K562 (cell line): ENCODE measurements at regions of chr5 and their contacts with region 1.

Region 1: DNA sequence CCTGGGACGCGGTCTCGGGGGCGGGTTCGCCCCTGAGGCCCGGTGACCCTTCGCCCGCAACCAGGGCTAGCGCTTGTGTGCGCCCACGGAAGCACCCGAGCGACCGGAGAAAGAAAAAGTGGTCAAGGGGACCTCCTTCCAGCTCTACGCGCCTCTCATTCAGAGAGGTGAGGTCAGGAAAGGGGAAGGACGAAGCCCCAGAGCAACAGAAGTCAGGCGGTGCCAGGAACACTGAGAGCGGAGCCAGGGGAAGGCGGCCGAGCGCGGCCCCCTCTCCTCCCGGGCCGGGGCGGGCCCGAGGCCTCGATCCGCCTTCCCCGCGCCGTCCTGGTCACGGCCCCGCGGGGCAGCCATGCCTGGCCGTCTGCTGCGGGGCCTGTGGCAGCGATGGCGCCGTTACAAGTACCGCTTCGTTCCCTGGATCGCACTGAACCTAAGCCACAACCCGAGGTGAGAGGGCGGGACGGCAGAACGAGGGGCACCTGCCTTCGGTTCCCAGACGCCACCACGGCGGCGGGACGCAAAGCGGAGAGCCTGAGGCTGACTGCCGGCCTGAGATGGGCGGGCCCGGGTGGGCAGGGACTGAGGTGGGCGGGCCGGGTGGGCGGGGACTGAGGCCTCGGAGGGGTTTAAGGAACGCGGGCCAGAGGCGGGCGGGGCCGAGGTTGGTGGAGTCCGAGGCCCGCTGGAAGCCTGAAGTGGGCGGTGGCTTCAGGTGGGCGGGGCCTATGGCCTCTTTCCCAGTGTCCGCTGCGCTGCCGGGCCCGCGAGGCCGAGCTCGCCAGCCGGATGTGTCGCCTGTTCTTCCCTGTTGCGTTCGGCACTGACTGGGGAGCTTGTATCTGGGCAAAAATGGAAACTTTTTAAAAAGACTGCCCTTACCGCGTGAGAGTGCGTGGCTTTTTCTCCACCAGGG is at the start of gene SETD9:
- DNase-seq: peak; percentile 96 to 98 (median 97)
- ATAC-seq: peak; percentile 92
- H3K4me3 ChIP-seq: peak within 1 kb of the TSS; percentile 64
- H3K27ac ChIP-seq: peak within 1 kb of the TSS; percentile 97
- H3K4me1 ChIP-seq: peaks cover 0 to 7% of the 10 kb centered on the region in 2 experiments; a peak in 3 of 5 replicates
- H3K27me3 ChIP-seq: no peaks in the 10 kb centered on the region
- CTCF ChIP-seq: no peak
- EP300 ChIP-seq: no peak
- POLR2A ChIP-seq: peak; percentile 98
- RAD21 ChIP-seq: 0 out of 4 replicates have a peak, but pooled peaks of 1 of the 2 experiments have one; percentile 2
- polyA plus RNA-seq, gene SETD9: 26.1 to 32.6 TPM

Region 2: DNA sequence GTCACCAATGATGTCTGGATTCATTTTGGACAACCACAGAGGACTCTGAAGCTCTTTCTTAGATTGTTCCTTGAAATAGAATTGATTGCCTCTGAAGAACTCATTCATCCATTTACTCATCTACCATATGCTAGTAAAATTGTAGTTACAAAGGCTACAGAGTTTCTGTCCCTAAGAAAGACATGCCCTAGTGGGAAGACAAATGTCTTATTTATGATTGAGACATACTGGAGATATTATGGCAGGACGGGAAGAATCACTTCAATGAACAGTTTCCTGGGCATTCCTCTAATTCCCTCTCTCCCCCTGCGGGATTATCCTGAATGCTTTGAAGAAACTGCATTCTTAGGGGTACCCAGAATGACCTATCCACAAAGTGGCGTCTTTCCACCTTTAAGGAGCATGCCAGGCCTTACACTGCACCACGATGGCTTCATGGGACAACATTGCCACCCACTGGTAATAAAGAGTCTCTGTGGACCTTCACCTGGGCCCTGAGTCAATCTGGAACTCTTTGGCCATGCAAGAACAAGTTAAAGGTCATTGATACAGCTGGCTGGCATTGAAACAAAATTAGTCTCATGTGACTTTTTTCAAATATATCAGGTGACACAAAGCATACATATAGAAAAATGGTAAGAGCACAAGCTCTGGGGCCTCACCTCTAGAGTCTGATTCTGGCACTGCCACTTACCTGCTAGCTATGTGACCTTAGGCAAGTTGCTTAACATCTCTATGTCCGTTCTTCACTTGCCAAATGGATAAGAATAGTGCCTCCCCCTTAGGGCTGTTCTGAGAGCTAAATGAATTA is 708.5 kb before region 1 on chr5:
- CTCF ChIA-PET with region 1: no interaction called
- POLR2A ChIA-PET with region 1: no interaction called
- in situ Hi-C with region 1: no loop called
- intact Hi-C with region 1: no loop called
- DNase-seq: peak; percentile 38 to 81 (median 56)
- ATAC-seq: peak; percentile 100
- H3K4me3 ChIP-seq: no peak overlapping the region
- H3K27ac ChIP-seq: no peak overlapping the region
- H3K4me1 ChIP-seq: peaks cover 0 to 8% of the 10 kb centered on the region in 2 experiments; a peak in 2 of 5 replicates
- H3K27me3 ChIP-seq: no peaks in the 10 kb centered on the region
- CTCF ChIP-seq: peak; percentile 82 to 93 (median 93)
- EP300 ChIP-seq: no peak
- POLR2A ChIP-seq: no peak
- RAD21 ChIP-seq: peak; percentile 97 to 99

Region 3: DNA sequence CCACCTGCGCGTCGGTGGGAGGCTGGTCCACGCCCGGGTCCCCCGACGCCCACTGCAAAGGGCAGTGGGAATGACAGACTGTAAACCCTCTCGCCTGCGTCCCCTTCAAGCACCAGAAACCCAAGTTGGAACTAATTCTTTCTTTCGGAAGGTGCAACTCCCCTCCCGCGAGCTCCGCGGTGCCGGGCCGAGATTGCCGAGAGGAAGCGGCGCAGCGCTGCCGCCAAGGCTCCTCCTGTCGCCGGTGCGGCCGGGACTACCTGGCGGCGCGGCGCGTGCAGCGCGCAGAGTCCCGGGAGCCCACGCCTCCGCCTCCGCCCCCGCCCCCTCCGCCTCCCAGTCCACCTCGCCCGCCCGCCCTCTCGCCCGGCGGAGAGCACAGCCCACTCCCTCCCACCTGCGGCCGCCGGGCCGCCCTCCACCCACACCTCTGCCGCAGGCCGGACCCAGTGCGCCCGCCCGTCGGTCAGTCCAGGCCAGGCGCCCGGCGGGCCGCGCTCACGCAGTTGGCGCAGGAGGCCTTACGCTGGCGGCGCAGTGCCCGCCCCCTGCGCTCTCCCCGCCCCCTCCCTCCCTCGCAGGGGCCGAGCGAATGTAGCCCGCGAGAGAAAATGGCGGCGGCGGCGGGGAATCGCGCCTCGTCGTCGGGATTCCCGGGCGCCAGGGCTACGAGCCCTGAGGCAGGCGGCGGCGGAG is 94.4 kb before region 1 on chr5 and contains the start of gene MAP3K1:
- CTCF ChIA-PET with region 1: no interaction called
- POLR2A ChIA-PET with region 1: no interaction called
- in situ Hi-C with region 1: no loop called
- intact Hi-C with region 1: loop called (anchors 5 kb)
- DNase-seq: peak; percentile 86 to 91 (median 90)
- ATAC-seq: peak; percentile 74
- H3K4me3 ChIP-seq: peak within 1 kb of the TSS; percentile 83
- H3K27ac ChIP-seq: peak within 1 kb of the TSS; percentile 86
- H3K4me1 ChIP-seq: peaks cover 30% of the 10 kb centered on the region in 2 experiments
- H3K27me3 ChIP-seq: no peaks in the 10 kb centered on the region
- CTCF ChIP-seq: no peak; a peak in 1 of 6 replicates
- EP300 ChIP-seq: no peak
- POLR2A ChIP-seq: peak; percentile 49; the same call in 1 of the 2 replicates
- RAD21 ChIP-seq: no peak; a peak in 1 of 4 replicates
- polyA plus RNA-seq, gene MAP3K1: 3.9 to 6.9 TPM

Region 4: GRCh38 chr5:56951946-56952691 is 42.6 kb after region 1 on chr5 and contains the start of gene MIER3:
- CTCF ChIA-PET with region 1: no interaction called
- POLR2A ChIA-PET with region 1: interaction called, 6 read pairs
- in situ Hi-C with region 1: no loop called
- intact Hi-C with region 1: loop called (anchors 5 kb)
- DNase-seq: peak; percentile 79 to 96 (median 94)
- ATAC-seq: peak; percentile 90
- H3K4me3 ChIP-seq: peak within 1 kb of the TSS; percentile 64
- H3K27ac ChIP-seq: peak within 1 kb of the TSS; percentile 67; the same call in 2 of the 3 replicates
- H3K4me1 ChIP-seq: peaks cover 7 to 17% of the 10 kb centered on the region in 2 experiments; a peak in 4 of 5 replicates
- H3K27me3 ChIP-seq: peaks cover 0 to 6% of the 10 kb centered on the region in 2 experiments; a peak in 3 of 5 replicates
- CTCF ChIP-seq: no peak
- EP300 ChIP-seq: no peak
- POLR2A ChIP-seq: no peak; the same call in 1 of the 2 replicates
- RAD21 ChIP-seq: no peak
- polyA plus RNA-seq, gene MIER3: 4.1 to 6.2 TPM

Region 5: DNA sequence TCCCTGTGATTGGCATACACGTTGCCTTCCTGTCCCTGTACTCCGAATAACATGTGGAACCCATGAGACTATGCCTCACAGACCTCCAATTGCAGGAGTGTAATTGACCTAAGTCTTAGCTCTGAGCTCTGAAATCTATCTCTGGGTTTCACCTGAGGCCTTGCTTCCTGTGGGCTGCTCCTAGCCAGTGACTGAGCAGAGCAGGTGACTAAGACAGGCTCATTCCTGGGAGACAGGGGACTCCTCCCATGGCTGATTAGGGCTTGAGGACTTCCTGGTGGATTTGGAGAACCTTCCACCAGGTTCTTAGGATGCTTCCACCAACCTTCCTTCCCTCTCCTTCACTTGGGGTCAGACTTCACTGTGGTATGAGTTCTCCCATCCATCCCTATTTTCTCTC is 64.7 kb after region 1 on chr5:
- CTCF ChIA-PET with region 1: no interaction called
- POLR2A ChIA-PET with region 1: no interaction called
- in situ Hi-C with region 1: no loop called
- intact Hi-C with region 1: no loop called
- DNase-seq: no peak
- ATAC-seq: no peak
- H3K4me3 ChIP-seq: no peak overlapping the region
- H3K27ac ChIP-seq: no peak overlapping the region
- H3K4me1 ChIP-seq: no peaks in the 10 kb centered on the region
- H3K27me3 ChIP-seq: peaks cover 15 to 21% of the 10 kb centered on the region in 2 experiments; a peak in 4 of 5 replicates
- CTCF ChIP-seq: no peak
- EP300 ChIP-seq: no peak
- POLR2A ChIP-seq: no peak
- RAD21 ChIP-seq: no peak

Region 6: GRCh38 chr5:56986626-56986947 is 77.0 kb after region 1 on chr5:
- CTCF ChIA-PET with region 1: no interaction called
- POLR2A ChIA-PET with region 1: no interaction called
- in situ Hi-C with region 1: no loop called
- intact Hi-C with region 1: loop called (anchors 10 kb)
- DNase-seq: no peak
- ATAC-seq: no peak; the same call in 2 of the 3 replicates
- H3K4me3 ChIP-seq: no peak overlapping the region
- H3K27ac ChIP-seq: no peak overlapping the region
- H3K4me1 ChIP-seq: no peaks in the 10 kb centered on the region
- H3K27me3 ChIP-seq: peaks cover 12 to 15% of the 10 kb centered on the region in 2 experiments; a peak in 3 of 5 replicates
- CTCF ChIP-seq: no peak
- EP300 ChIP-seq: no peak
- POLR2A ChIP-seq: no peak
- RAD21 ChIP-seq: peak in 1 of 2 experiments; percentile 25; a peak in 2 of 4 replicates